BJ (cell line): ENCODE measurements at regions of chr1 and their contacts with region 1.

Region 1: DNA sequence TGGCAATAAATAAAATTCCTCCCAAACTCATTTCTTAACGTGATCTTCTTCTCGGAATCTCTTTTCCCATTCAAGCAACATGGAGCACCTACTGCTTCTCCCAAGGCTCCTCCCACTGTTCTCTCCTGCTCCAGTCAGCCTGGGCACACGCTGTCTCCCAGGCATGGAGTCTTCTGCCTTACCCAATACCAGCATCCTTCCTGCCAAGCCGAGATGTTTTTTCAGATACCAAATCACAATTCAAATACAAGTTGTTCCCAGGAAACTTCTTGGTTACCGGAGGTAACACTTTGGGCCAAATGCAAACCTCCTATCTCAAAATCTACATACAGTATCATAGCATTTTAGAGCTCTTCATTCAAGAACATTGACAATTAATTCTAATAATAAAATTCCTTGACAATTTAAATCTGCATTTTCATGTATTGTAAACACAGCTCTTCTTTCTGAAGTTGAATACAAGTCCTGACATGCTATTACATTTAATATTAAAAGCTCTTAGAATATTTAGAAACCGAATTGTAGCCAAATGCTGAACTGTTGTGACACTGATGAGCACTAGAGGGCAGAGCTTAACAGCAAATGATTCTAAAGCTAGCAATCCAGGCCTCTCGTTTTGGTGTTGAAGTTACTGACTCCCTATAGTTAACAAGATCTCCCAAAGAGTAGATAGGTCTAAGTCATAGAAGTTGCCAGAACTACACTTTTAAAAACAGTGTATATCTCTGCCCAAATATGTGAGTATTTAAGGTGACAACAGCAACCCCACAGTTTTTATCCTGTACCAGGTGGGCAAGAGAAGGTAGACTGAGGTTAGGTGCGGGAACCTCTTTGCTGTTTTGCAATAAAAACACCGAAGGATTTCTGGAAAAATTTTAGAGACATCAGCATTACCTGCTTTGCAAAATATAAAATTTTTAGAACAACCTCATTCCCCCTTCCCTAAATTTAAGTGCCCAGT is 52.3 kb downstream of the BCAR3 start:
- DNase-seq: no peak
- H3K4me3 ChIP-seq: no peak overlapping the region
- H3K27me3 ChIP-seq: no peaks in the 10 kb centered on the region
- CTCF ChIP-seq: peak; percentile 72

Region 2: GRCh38 chr1:93591676-93592550 is 37.5 kb before region 1 on chr1:
- CTCF ChIA-PET with region 1: no interaction called
- POLR2A ChIA-PET with region 1: no interaction called
- DNase-seq: no peak
- H3K4me3 ChIP-seq: no peak overlapping the region
- H3K27me3 ChIP-seq: no peaks in the 10 kb centered on the region
- CTCF ChIP-seq: no peak

Region 3: DNA sequence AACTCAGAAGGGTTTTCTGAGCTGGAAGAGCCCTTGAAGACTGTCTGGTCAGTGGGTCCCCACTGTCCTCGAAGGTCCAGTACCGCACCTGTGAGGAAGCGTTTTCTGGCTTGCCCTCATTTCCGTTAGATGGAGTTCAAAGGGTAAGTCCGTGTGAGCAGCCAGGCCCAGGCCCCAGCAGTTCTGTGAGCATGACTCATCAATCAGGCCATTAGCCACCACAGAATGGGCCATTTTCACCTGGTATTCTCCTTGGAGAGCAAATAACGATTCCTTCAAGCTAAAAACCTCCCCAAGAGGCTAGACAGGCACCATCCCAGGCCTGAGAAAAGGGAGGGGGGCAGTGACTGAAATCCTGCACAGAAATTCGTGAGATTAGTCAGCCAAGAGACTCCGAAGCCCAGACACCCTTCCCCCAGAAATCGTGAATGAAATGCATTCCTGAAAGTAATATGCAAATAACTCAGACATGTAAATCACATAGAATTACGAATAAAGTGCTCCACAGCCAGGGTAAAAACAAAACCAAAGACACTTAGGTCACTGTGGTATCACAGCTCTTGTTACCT is 13.7 kb before region 1 on chr1:
- CTCF ChIA-PET with region 1: interaction called, 14 read pairs
- POLR2A ChIA-PET with region 1: no interaction called
- DNase-seq: peak; percentile 56
- H3K4me3 ChIP-seq: no peak overlapping the region
- H3K27me3 ChIP-seq: no peaks in the 10 kb centered on the region
- CTCF ChIP-seq: no peak

Region 4: GRCh38 chr1:93670141-93670540 is 40.8 kb after region 1 on chr1:
- CTCF ChIA-PET with region 1: interaction called, 18 read pairs
- POLR2A ChIA-PET with region 1: no interaction called
- DNase-seq: no peak
- H3K4me3 ChIP-seq: no peak overlapping the region
- H3K27me3 ChIP-seq: no peaks in the 10 kb centered on the region
- CTCF ChIP-seq: no peak

Region 5: GRCh38 chr1:93680757-93681550 is 51.6 kb after region 1 on chr1:
- CTCF ChIA-PET with region 1: interaction called, 15 read pairs
- POLR2A ChIA-PET with region 1: no interaction called
- DNase-seq: peak; percentile 63
- H3K4me3 ChIP-seq: peak overlapping the region; percentile 78
- H3K27me3 ChIP-seq: no peaks in the 10 kb centered on the region
- CTCF ChIP-seq: peak; percentile 75

Region 6: GRCh38 chr1:93846211-93846991 is 217.0 kb after region 1 on chr1:
- CTCF ChIA-PET with region 1: interaction called, 84 read pairs
- POLR2A ChIA-PET with region 1: no interaction called
- DNase-seq: no peak
- H3K4me3 ChIP-seq: peak overlapping the region; percentile 84
- H3K27me3 ChIP-seq: no peaks in the 10 kb centered on the region
- CTCF ChIP-seq: peak; percentile 59